Gastrocnemius medialis (tissue), 4 donors: ENCODE measurements at regions of chr17 and their contacts with region 1.

Region 1: DNA sequence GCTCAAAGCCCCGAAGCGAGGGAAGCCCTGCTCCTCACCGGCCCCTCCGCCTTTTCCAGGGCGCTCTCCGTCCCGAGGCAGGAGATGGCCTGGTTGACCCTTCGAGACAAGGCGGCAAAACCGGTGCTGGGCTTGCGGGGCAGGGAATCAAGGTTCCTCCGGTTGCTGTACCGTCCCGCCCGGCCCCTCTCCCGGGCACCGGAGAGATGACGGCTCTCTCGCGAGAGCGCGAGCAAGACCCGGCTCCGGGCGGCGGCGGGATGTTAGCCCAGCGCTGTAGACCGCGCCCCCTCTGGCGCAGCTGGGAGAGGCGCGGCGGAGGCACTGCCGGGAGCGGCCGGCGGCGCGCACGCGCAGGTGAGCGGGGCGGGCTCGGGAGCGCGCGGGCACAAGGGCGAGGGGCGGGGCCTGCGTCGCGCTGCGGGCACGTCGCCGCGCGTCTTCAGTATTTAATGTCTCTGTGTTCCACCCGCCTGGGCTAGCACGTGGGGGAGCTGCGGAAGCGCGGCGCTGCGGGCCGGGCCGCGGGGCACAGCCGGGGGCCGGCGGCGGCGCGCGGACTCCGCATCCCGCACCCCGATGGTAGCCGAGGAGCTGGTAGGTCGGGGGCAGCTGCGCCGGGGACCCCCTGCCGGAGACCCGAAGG is at the start of gene AKAP1:
- DNase-seq: peak; percentile 90 to 95
- ATAC-seq: peak; percentile 77 to 78
- H3K4me3 ChIP-seq: peak within 1 kb of the TSS; percentile 75 to 95 (median 82)
- H3K27ac ChIP-seq: peak within 1 kb of the TSS; percentile 91 to 99 (median 94)
- H3K4me1 ChIP-seq: peaks cover 41% of the 10 kb centered on the region in 2 donors
- H3K27me3 ChIP-seq: no peaks in the 10 kb centered on the region
- CTCF ChIP-seq: peak in 4 of 5 experiments; percentile 24 to 50 (median 32)
- POLR2A ChIP-seq: peak; percentile 96 to 98
- total RNA-seq, gene AKAP1: 57.5 to 174 (median 117) TPM

Region 2: DNA sequence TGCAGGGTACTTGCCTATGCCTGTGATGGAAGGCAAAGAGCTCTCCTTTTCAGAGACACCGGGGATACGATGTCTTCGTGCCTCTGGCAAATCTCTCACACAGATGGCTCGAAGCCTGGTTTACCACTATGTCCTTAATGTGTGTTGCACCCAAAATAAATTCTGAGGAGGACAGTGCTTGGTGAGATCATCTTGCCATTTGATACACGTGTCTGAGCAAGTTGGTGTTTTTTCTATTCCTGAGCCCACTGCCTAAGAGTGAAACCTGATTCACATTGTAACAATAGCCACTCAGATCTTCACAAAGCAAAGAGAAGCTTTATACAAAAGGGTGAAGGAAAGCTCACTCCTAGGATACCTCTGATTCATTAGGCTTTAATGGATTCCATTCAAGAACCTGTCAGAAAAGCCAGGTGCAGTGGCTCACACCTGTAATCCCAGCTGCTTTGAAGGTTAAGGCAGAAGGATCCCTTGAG is 33.0 kb before region 1 on chr17:
- in situ Hi-C with region 1: no loop called
- intact Hi-C with region 1: loop called (anchors 2 kb)
- DNase-seq: peak; percentile 76 to 79
- ATAC-seq: peak; percentile 91 to 96
- H3K4me3 ChIP-seq: no peak overlapping the region
- H3K27ac ChIP-seq: peak overlapping the region; percentile 72 to 88 (median 84)
- H3K4me1 ChIP-seq: peaks cover 19 to 35% of the 10 kb centered on the region in 2 donors
- H3K27me3 ChIP-seq: no peaks in the 10 kb centered on the region
- CTCF ChIP-seq: no peak
- POLR2A ChIP-seq: peak in 1 of 2 donors; percentile 46

Region 3: GRCh38 chr17:57849874-57850754 is 765.2 kb after region 1 on chr17 and contains the start of gene MRPS23:
- in situ Hi-C with region 1: no loop called
- intact Hi-C with region 1: loop called (anchors 1 kb)
- DNase-seq: peak; percentile 98 to 99
- ATAC-seq: peak; percentile 63 to 72
- H3K4me3 ChIP-seq: peak within 1 kb of the TSS; percentile 82 to 98 (median 88)
- H3K27ac ChIP-seq: peak within 1 kb of the TSS; percentile 91 to 98 (median 96)
- H3K4me1 ChIP-seq: peaks cover 52% of the 10 kb centered on the region in 2 donors
- H3K27me3 ChIP-seq: no peaks in the 10 kb centered on the region
- CTCF ChIP-seq: peak in 1 of 5 experiments; percentile 9
- POLR2A ChIP-seq: peak; percentile 83 to 87
- total RNA-seq, gene MRPS23: 24.3 to 47.2 (median 35.5) TPM

Region 4: GRCh38 chr17:57995076-57995956 is 910.4 kb after region 1 on chr17:
- in situ Hi-C with region 1: loop called in 1 of 4 experiments (anchors 25 kb)
- intact Hi-C with region 1: no loop called
- DNase-seq: peak; percentile 80 to 93
- ATAC-seq: peak; percentile 92 to 93
- H3K4me3 ChIP-seq: no peak overlapping the region
- H3K27ac ChIP-seq: peak overlapping the region; percentile 79 to 99 (median 98)
- H3K4me1 ChIP-seq: peaks cover 63 to 70% of the 10 kb centered on the region in 2 donors
- H3K27me3 ChIP-seq: no peaks in the 10 kb centered on the region
- CTCF ChIP-seq: peak; percentile 61 to 84 (median 75)
- POLR2A ChIP-seq: no peak